PC-9 (cell line): ENCODE measurements at regions of chr3 and their contacts with region 1.

Region 1: GRCh38 chr3:150348500-150348899 is 59.6 kb upstream of the TSC22D2 start:
- DNase-seq: peak; percentile 64 to 98
- H3K4me3 ChIP-seq: no peak overlapping the region; the same call in 1 of the 2 replicates
- H3K27ac ChIP-seq: peak overlapping the region; percentile 87
- H3K4me1 ChIP-seq: peaks cover 69% of the 10 kb centered on the region
- H3K27me3 ChIP-seq: no peaks in the 10 kb centered on the region
- CTCF ChIP-seq: no peak

Region 2: GRCh38 chr3:149969940-149970715 is 378.4 kb before region 1 on chr3:
- CTCF ChIA-PET with region 1: no interaction called
- POLR2A ChIA-PET with region 1: no interaction called
- intact Hi-C with region 1: loop called (anchors 5 kb)
- DNase-seq: peak; percentile 79 to 90
- H3K4me3 ChIP-seq: peak overlapping the region; percentile 78
- H3K27ac ChIP-seq: peak overlapping the region; percentile 88
- H3K4me1 ChIP-seq: peaks cover 35% of the 10 kb centered on the region
- H3K27me3 ChIP-seq: no peaks in the 10 kb centered on the region
- CTCF ChIP-seq: no peak

Region 3: GRCh38 chr3:150286390-150287147 is 61.9 kb before region 1 on chr3:
- CTCF ChIA-PET with region 1: no interaction called
- POLR2A ChIA-PET with region 1: no interaction called
- intact Hi-C with region 1: loop called (anchors 1 kb)
- DNase-seq: peak; percentile 25 to 42
- H3K4me3 ChIP-seq: no peak overlapping the region
- H3K27ac ChIP-seq: peak overlapping the region; percentile 4; the same call in 1 of the 2 replicates
- H3K4me1 ChIP-seq: peaks cover 11% of the 10 kb centered on the region; the same call in 1 of the 2 replicates
- H3K27me3 ChIP-seq: no peaks in the 10 kb centered on the region
- CTCF ChIP-seq: peak; percentile 79

Region 4: DNA sequence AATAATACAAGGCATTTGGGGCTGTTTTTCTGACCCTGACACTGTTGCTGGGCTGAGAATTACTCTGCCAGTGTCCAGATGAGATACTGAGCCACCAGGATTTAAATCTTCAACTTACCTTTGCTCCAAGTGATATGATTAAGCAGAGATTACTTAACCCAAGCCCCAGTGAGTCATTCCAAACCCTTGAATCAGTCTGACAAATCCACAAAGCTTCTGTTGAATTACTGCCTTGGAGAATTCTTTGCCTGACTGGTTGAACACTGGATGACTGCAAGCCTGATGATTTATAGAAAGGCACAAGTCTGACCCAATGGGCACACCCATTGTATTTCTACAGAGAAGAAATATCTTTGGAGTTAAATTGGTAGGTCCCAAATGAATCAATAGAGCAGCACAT is 28.6 kb before region 1 on chr3:
- CTCF ChIA-PET with region 1: interaction called, 4 read pairs
- POLR2A ChIA-PET with region 1: no interaction called
- intact Hi-C with region 1: loop called (anchors 1 kb)
- DNase-seq: peak; percentile 58 to 98
- H3K4me3 ChIP-seq: peak overlapping the region; percentile 17; the same call in 1 of the 2 replicates
- H3K27ac ChIP-seq: peak overlapping the region; percentile 58
- H3K4me1 ChIP-seq: peaks cover 75% of the 10 kb centered on the region
- H3K27me3 ChIP-seq: no peaks in the 10 kb centered on the region
- CTCF ChIP-seq: no peak

Region 5: GRCh38 chr3:150371741-150372254 is 23.3 kb after region 1 on chr3:
- CTCF ChIA-PET with region 1: no interaction called
- POLR2A ChIA-PET with region 1: interaction called, 4 read pairs
- intact Hi-C with region 1: loop called (anchors 1 kb)
- DNase-seq: peak; percentile 77 to 99
- H3K4me3 ChIP-seq: peak overlapping the region; percentile 53; the same call in 1 of the 2 replicates
- H3K27ac ChIP-seq: peak overlapping the region; percentile 92
- H3K4me1 ChIP-seq: peaks cover 63% of the 10 kb centered on the region
- H3K27me3 ChIP-seq: no peaks in the 10 kb centered on the region
- CTCF ChIP-seq: no peak

Region 6: GRCh38 chr3:150495563-150496168 is 147.2 kb after region 1 on chr3:
- CTCF ChIA-PET with region 1: interaction called, 3 read pairs
- POLR2A ChIA-PET with region 1: interaction called, 3 read pairs
- intact Hi-C with region 1: loop called (anchors 1 kb)
- DNase-seq: no peak
- H3K4me3 ChIP-seq: no peak overlapping the region
- H3K27ac ChIP-seq: no peak overlapping the region
- H3K4me1 ChIP-seq: peaks cover 28% of the 10 kb centered on the region
- H3K27me3 ChIP-seq: no peaks in the 10 kb centered on the region
- CTCF ChIP-seq: peak; percentile 82

Region 7: GRCh38 chr3:150936693-150937092 is 588.2 kb after region 1 on chr3:
- CTCF ChIA-PET with region 1: no interaction called
- POLR2A ChIA-PET with region 1: no interaction called
- intact Hi-C with region 1: no loop called
- DNase-seq: no peak
- H3K4me3 ChIP-seq: no peak overlapping the region
- H3K27ac ChIP-seq: no peak overlapping the region
- H3K4me1 ChIP-seq: peaks cover 7% of the 10 kb centered on the region
- H3K27me3 ChIP-seq: no peaks in the 10 kb centered on the region
- CTCF ChIP-seq: no peak

Region 8: DNA sequence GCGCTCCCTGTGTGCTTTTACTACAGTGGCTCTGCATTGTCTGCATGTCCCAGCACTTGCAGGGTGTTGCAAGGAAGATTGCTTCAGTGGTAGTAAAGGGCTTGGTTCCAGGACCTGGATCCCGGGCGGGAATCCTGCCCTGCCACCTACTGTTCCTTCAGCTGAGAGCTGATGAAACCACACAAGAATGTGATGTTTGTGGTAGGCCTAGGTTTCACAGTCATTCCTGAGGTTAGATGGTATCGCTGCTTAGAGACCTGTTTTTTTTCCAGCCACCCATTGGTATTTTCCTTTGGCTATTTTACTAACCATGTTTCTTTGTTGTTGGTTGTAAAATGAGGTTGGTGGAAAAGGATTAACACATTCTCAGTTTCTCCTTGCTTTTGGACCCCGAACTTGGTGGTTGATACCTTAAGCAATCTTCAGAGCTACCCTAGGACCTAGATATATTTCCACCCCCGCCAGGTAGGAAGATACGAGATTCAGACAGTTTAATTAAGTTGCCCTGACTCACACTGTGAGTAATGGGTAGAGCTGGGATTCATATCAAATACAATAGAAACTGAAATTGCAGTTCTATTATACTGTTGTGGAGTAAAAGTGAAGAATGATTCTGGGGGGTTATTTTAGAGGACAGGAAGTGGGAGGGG is 956.7 kb after region 1 on chr3:
- CTCF ChIA-PET with region 1: no interaction called
- POLR2A ChIA-PET with region 1: no interaction called
- intact Hi-C with region 1: loop called (anchors 1 kb)
- DNase-seq: peak; percentile 95 to 99
- H3K4me3 ChIP-seq: peak overlapping the region; percentile 51; the same call in 1 of the 2 replicates
- H3K27ac ChIP-seq: peak overlapping the region; percentile 96
- H3K4me1 ChIP-seq: peaks cover 77% of the 10 kb centered on the region
- H3K27me3 ChIP-seq: no peaks in the 10 kb centered on the region
- CTCF ChIP-seq: no peak